ENCODE measurements at regions of chr1 and their contacts with region 1.

Region 1: DNA sequence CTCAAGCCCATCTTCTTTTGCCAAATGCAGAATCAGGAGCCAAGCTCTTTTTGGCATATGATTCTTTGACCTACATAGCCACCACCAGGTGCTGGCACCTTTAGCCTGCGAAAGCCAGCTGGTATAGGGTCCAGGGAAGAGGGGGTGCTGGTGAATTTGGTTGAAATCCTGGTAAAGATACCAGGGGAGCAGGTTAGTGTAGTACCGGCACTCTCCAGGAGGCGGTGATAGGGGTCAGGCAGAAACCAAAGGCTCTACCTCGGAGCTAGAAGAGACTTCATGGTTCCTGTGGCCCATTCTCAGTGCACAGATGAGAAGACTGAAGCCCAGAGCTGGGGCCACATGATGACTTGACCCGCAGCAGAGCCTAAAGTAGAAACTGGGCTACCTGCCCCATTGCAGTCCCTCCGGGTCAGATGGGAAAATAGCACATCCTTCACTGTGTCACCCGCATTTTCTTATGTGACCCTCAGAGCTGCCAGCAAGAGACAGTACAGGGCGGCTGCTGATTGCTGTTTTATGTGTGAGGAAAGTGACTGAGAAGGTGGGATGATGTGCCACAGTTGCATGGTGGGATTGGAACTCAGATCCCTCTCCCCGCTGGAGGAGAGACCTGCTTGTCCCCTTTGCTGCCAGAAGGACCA is 36.0 kb upstream of the IL19 start:
- DNase-seq: peak in 2 of 5 donors; percentile 34 to 46
- H3K4me3 ChIP-seq: no peak overlapping the region
- H3K27ac ChIP-seq: no peak overlapping the region
- H3K4me1 ChIP-seq: peaks cover 0 to 24% (median 0%) of the 10 kb centered on the region in 3 donors
- H3K27me3 ChIP-seq: no peaks in the 10 kb centered on the region
- CTCF ChIP-seq: peak; percentile 48

Region 2: DNA sequence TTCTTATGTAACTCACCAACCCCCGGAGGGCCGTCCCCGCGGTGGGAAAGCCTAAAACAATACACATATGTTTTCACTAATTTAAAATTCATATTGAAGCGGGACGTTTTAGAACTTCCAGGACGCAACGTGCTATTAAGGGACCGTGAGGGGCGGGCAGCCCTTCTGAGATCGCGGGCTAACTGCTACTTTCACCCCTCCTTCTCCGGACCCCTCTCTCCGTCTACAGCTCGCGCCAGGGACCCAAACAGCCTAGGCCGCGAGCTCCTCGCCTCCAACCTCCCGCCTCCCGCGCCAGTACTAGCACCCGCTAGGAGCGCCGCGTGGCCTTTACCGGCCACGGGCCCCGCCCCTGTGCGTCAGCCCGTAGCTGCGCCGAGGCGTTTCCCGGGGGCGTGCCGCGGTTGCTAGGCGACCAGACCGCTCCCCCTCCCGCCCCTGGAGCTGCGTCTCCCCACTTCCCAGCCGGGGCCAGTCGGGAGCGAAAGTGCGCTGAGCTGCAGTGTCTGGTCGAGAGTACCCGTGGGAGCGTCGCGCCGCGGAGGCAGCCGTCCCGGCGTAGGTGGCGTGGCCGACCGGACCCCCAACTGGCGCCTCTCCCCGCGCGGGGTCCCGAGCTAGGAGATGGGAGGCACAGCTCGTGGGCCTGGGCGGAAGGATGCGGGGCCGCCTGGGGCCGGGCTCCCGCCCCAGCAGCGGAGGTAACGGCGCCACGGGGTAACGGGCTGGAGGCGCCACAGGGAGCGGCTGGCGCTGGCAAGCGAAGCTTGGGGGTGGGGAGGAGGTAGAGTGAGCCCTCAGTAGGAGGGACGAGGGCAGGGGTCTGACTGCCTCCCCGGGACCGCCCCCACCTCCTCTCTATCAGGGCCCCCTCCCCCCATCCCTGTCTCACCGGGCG is 99.3 kb before region 1 on chr1 and contains the start of gene DYRK3:
- intact Hi-C with region 1: no loop called
- DNase-seq: peak; percentile 91 to 98 (median 95)
- H3K4me3 ChIP-seq: peak within 1 kb of the TSS; percentile 62 to 79 (median 70)
- H3K27ac ChIP-seq: peak within 1 kb of the TSS; percentile 76 to 85
- H3K4me1 ChIP-seq: peaks cover 0 to 11% (median 6%) of the 10 kb centered on the region in 3 donors
- H3K27me3 ChIP-seq: no peaks in the 10 kb centered on the region
- CTCF ChIP-seq: no peak
- total RNA-seq, gene DYRK3: 12.7 TPM

Region 3: DNA sequence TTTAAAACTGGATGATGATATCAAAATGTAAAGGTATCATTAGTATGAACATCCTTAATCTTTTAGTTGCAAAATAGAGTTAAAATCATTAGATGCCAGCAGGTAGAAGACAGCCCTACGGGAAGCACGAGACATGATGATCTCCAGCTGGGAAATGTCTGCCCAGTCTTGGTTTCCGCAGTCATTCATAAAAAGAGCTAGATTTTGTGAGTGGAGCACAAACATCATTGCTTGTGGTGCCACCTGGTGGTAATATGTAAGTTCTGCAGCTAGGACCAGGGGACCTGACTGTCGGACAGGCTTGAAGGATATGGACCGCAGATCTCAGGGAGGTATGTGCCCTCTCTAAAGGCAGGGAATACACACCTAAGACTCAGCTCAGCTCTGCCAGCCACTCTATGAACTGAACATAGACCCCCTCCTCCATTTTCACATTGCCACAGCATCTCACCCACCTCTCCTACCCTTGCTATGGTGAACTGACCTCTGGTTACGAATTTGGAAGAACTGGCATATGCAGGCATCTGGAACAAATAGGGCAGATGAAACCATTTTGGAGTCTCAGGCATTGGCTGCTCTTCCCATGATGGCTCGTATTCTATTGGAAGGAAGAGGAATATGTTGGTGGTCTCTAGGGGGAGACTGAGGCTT is 177.9 kb after region 1 on chr1:
- intact Hi-C with region 1: loop called (anchors 5 kb)
- DNase-seq: peak; percentile 54 to 93 (median 78)
- H3K4me3 ChIP-seq: no peak overlapping the region
- H3K27ac ChIP-seq: no peak overlapping the region
- H3K4me1 ChIP-seq: peaks cover 0 to 7% (median 0%) of the 10 kb centered on the region in 3 donors
- H3K27me3 ChIP-seq: no peaks in the 10 kb centered on the region
- CTCF ChIP-seq: peak; percentile 95